Body of pancreas (tissue), 4 donors: ENCODE measurements at regions of chr18 and their contacts with region 1.

Region 1: DNA sequence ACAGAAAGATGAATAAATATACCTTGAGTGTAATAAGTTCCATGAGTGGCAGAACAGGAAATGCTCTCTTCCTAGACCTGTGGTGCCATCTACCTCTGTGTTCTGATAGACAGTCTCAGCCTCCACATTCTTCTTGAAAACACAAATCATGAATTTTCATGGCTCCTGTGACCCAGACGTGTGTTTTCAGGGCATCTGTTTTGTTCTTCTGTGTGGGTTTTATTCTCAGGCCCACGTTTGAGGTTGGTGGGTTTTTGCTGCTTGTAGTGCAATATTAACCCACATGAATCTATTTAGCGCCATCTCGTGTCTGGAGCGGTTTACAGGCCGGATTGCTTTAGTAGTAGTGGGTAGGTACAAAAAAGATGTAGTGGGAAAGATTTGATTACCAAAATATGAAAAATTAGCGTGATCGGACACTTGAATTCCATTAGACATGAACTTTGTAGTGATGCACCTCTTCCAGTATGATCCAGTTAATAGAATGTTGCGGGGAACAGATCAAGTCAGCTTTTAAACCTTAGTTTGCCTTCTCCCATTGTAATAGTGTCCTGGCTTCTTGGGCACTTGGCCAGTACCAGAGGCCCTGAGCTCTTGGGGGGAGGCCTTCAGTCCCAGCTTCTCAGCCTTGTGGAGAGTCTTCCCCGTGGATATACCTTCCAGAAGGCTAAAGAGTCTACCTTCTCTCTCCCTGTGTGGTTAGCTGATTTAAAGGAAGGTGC is 256.5 kb downstream of the TPGS2 start:
- DNase-seq: peak; percentile 32 to 68 (median 56)
- ATAC-seq: peak; percentile 55
- H3K4me3 ChIP-seq: no peak overlapping the region
- H3K27ac ChIP-seq: no peak overlapping the region
- H3K4me1 ChIP-seq: no peaks in the 10 kb centered on the region
- H3K27me3 ChIP-seq: no peaks in the 10 kb centered on the region
- CTCF ChIP-seq: peak in 6 of 7 experiments; percentile 39 to 69 (median 56)
- POLR2A ChIP-seq: no peak

Region 2: DNA sequence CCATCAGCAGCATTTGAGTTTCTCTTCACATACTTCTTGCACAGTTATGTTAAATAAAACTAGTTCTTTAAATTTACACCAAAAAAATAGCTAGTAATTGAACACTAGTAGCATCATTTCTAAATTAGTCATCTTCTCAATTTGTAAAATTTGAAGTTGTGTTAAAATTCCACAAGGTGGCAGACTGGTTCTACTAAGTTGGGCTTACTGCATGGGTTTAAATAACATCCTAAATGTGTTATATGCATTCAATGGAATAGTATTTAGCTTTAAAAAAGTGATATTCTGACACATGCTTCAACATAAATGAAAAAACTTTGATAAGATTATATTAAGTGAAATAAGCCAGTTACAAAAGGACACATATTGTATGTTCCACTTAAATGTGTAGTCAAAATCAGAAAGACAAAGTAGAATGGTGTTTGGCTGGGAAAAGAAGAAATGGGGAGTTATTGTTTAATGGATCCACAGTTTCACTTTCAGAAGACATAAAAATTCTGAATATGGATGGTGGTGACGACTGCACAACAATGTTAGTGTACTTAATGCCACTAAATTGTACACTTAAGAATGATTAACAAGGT is 476.3 kb before region 1 on chr18:
- intact Hi-C with region 1: loop called (anchors 10 kb)
- DNase-seq: no peak
- ATAC-seq: no peak
- H3K4me3 ChIP-seq: no peak overlapping the region
- H3K27ac ChIP-seq: no peak overlapping the region
- H3K4me1 ChIP-seq: no peaks in the 10 kb centered on the region
- H3K27me3 ChIP-seq: no peaks in the 10 kb centered on the region
- CTCF ChIP-seq: peak; percentile 16 to 73 (median 57)
- POLR2A ChIP-seq: no peak

Region 3: DNA sequence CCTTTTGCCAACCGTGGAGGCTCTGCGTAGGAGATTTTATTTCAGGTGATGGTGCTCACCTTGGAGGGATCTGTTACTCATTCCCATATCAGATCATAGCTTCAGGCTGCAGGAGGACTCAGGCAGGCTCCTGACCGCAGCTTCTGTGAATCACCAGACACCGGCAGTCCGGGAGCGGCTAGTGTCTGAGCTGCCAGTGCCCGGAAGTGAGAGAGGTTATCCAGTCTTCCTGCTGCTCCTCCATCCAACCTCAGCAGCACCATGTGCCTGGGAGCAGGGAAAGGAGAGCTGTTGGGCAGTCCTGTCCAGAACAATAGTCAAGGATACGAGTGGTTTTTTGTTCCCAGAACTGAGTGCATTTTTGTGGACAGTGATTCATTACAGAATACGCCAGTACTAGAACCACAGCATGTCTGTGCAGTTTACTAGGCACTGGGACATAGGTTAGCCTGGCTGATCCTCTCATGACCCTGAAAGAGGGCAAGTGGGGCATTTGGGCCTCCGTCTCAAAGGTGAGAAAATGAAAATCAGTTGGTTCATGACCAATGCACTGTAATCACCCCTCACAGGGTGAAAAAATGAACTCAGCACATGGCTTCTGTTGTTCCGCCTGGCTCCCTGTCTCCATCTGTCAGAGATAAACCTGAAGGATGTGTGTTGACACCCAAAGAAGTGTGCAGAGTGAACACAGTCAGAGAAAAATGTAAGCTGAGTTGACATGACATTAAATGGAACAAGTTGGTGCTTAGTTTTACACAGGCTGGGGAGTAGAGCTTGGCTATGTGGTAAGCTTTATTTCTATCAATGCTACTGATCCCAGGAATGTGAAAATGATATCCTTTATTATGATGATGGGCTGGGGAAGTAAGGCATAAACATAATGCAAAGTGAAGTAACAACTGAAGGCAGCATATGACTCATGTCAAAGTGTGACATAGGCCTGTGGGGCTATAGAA is 262.6 kb before region 1 on chr18:
- intact Hi-C with region 1: loop called (anchors 10 kb)
- DNase-seq: peak in 1 of 4 donors; percentile 27
- ATAC-seq: no peak
- H3K4me3 ChIP-seq: no peak overlapping the region
- H3K27ac ChIP-seq: no peak overlapping the region
- H3K4me1 ChIP-seq: peaks cover 7% of the 10 kb centered on the region
- H3K27me3 ChIP-seq: no peaks in the 10 kb centered on the region
- CTCF ChIP-seq: no peak
- POLR2A ChIP-seq: no peak

Region 4: GRCh38 chr18:36493349-36494159 is 78.7 kb before region 1 on chr18:
- intact Hi-C with region 1: no loop called
- DNase-seq: peak; percentile 51 to 89 (median 80)
- ATAC-seq: peak; percentile 99
- H3K4me3 ChIP-seq: no peak overlapping the region
- H3K27ac ChIP-seq: peak overlapping the region in 3 of 4 donors; percentile 32 to 69 (median 63)
- H3K4me1 ChIP-seq: peaks cover 7% of the 10 kb centered on the region
- H3K27me3 ChIP-seq: no peaks in the 10 kb centered on the region
- CTCF ChIP-seq: no peak
- POLR2A ChIP-seq: peak in 2 of 3 donors; percentile 38 to 50